GM12878 (cell line): ENCODE measurements at regions of chr2 and their contacts with region 1.

Region 1: GRCh38 chr2:150487537-150488429 is at the start of gene RND3:
- DNase-seq: no peak
- ATAC-seq: peak; percentile 60
- H3K4me3 ChIP-seq: no peak within 1 kb of the TSS
- H3K27ac ChIP-seq: no peak within 1 kb of the TSS
- H3K4me1 ChIP-seq: no peaks in the 10 kb centered on the region
- H3K27me3 ChIP-seq: peaks cover 0 to 12% of the 10 kb centered on the region in 2 experiments
- CTCF ChIP-seq: peak; percentile 66 to 76 (median 73)
- EP300 ChIP-seq: no peak
- POLR2A ChIP-seq: no peak
- RAD21 ChIP-seq: peak; percentile 75
- polyA plus RNA-seq, gene RND3: 1.0 to 1.3 TPM

Region 2: DNA sequence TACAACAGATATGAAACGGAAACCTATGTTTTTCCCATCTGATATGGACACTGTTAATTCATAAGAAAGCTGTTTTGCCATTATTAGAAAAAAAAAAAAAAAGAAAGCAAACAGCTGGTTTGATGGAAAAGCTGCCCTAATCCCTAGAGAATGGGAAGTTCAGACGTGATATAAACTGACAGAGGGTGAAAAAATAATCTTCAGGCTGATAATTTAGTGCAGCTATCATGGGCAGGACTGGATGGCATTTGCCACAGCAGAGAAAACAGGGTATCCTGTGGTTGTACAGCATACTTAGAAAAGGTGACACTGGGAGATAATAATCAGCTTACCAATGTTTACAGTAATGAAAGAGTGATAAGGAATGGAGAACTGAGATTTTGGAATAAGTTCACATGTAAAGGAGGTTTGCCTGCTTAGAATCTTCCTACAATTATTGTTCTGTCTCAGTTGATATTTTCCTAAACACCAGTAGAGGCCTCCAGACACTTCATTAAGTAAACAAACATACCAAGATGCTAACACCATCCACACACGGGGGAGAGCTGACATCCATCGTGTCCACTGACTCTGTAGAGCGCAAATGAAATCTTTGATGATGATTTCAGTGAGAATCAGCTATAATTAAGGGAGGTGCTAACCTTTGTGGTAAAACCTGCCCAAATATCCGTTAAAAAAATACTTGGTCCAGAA is 688.6 kb before region 1 on chr2:
- CTCF ChIA-PET with region 1: no interaction called
- POLR2A ChIA-PET with region 1: no interaction called
- RAD21 ChIA-PET with region 1: no interaction called
- SMC1A ChIA-PET with region 1: no interaction called
- in situ Hi-C with region 1: no loop called
- intact Hi-C with region 1: loop called (anchors 5 kb)
- DNase-seq: no peak
- ATAC-seq: peak; percentile 60
- H3K4me3 ChIP-seq: no peak overlapping the region
- H3K27ac ChIP-seq: no peak overlapping the region
- H3K4me1 ChIP-seq: no peaks in the 10 kb centered on the region
- H3K27me3 ChIP-seq: no peaks in the 10 kb centered on the region
- CTCF ChIP-seq: peak in 2 of 3 experiments; percentile 19 to 51; a peak in 3 of 6 replicates
- EP300 ChIP-seq: no peak
- POLR2A ChIP-seq: no peak
- RAD21 ChIP-seq: peak; percentile 51

Region 3: DNA sequence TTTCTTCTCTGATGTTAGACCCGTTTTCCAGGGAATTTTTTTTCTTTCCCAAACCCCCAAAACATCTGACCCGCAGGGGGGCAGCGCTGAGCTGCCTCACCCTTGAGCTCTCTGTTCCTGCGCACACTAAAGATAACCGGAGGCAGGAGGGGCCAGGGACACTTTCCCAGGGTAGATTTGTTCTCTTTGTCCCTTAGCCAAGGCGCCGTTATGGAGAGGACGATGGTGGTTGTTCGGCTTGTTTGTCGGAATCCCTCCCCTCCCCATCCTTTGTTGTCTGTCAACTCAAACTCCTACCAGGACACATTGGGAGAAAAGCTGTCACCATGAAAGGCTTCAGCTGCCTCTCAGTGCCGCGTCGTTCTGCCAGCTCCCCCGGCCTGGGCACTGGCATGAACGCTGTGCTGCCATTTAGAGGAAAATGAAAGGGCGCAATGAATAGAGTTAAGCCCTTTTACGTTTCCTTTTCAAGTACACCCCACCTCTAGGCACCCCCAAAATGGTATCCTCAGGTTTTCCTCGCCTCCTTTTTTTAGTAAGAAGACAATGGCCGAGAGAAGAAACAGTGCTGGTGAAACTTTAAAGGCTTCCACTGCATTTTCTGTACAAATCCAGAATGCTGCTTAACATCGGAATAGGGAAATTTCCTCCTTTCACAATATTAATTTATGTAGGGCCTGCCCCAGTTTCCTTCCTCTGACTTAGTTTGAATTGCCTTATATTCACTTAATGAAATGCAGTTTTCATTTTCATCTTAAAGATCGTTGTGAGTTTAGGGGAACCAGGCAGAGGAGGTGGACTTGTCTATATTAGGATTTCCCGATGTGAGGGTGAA is 62.4 kb before region 1 on chr2:
- CTCF ChIA-PET with region 1: interaction called, 13 read pairs
- POLR2A ChIA-PET with region 1: no interaction called
- RAD21 ChIA-PET with region 1: interaction called, 11 read pairs
- SMC1A ChIA-PET with region 1: interaction called, 23 read pairs
- in situ Hi-C with region 1: no loop called
- intact Hi-C with region 1: no loop called
- DNase-seq: no peak
- ATAC-seq: peak; percentile 51
- H3K4me3 ChIP-seq: no peak overlapping the region
- H3K27ac ChIP-seq: no peak overlapping the region
- H3K4me1 ChIP-seq: no peaks in the 10 kb centered on the region
- H3K27me3 ChIP-seq: no peaks in the 10 kb centered on the region
- CTCF ChIP-seq: no peak
- EP300 ChIP-seq: no peak
- POLR2A ChIP-seq: no peak
- RAD21 ChIP-seq: no peak

Region 4: DNA sequence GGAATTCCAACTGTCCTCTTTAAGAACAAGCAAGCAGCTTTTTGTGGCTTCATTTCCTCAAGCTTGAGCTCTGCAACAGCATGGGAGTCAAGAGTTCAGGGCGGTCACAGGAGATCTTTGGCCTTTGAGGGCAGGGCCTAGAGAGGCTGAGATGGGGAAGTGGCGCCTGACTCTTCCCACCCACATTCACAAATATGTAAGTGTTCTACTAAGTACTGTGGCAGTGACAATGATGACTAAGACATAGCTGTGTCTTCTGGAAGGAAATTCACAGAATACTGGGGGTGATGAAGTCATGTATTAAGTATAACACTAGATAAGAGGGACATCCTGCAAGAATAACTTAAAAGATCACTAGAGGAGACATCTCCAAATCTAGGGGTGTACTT is 15.3 kb before region 1 on chr2:
- CTCF ChIA-PET with region 1: interaction called, 14 read pairs
- POLR2A ChIA-PET with region 1: interaction called, 45 read pairs
- RAD21 ChIA-PET with region 1: interaction called, 143 read pairs
- SMC1A ChIA-PET with region 1: interaction called, 66 read pairs
- in situ Hi-C with region 1: no loop called
- intact Hi-C with region 1: no loop called
- DNase-seq: no peak
- ATAC-seq: peak; percentile 85
- H3K4me3 ChIP-seq: no peak overlapping the region
- H3K27ac ChIP-seq: no peak overlapping the region
- H3K4me1 ChIP-seq: no peaks in the 10 kb centered on the region
- H3K27me3 ChIP-seq: no peaks in the 10 kb centered on the region; a peak in 1 of 4 replicates
- CTCF ChIP-seq: no peak
- EP300 ChIP-seq: peak in 1 of 2 experiments; percentile 26; a peak in 1 of 4 replicates
- POLR2A ChIP-seq: no peak
- RAD21 ChIP-seq: no peak

Region 5: GRCh38 chr2:150528861-150529801 is 41.3 kb after region 1 on chr2:
- CTCF ChIA-PET with region 1: interaction called, 8 read pairs
- POLR2A ChIA-PET with region 1: interaction called, 7 read pairs
- RAD21 ChIA-PET with region 1: interaction called, 25 read pairs
- SMC1A ChIA-PET with region 1: interaction called, 29 read pairs
- in situ Hi-C with region 1: no loop called
- intact Hi-C with region 1: no loop called
- DNase-seq: peak; percentile 45
- ATAC-seq: peak; percentile 96
- H3K4me3 ChIP-seq: no peak overlapping the region
- H3K27ac ChIP-seq: no peak overlapping the region
- H3K4me1 ChIP-seq: no peaks in the 10 kb centered on the region; the same call in 1 of the 2 replicates
- H3K27me3 ChIP-seq: no peaks in the 10 kb centered on the region
- CTCF ChIP-seq: no peak
- EP300 ChIP-seq: no peak; a peak in 1 of 4 replicates
- POLR2A ChIP-seq: no peak
- RAD21 ChIP-seq: no peak

Region 6: DNA sequence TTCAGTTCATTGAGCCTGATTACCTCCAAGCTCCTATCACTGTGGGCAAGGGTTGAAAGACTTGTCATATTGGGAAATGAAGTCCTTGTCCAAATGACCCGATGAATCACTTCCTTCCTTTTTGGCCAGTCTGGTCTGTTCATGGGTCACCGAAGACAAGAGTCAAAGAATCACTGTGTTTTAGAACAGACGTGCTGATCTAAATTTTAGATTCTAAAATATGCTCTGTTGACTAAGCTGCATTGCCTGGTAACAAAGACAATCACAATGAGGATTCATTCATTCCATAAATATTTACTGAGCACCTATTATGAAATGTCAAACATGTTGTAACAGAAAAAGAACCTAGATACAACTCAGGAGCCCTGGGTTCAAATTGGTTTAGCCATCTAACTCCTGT is 99.1 kb after region 1 on chr2:
- CTCF ChIA-PET with region 1: interaction called, 3 read pairs
- POLR2A ChIA-PET with region 1: interaction called, 8 read pairs
- RAD21 ChIA-PET with region 1: interaction called, 5 read pairs
- SMC1A ChIA-PET with region 1: interaction called, 10 read pairs
- in situ Hi-C with region 1: no loop called
- intact Hi-C with region 1: no loop called
- DNase-seq: no peak
- ATAC-seq: peak; percentile 51
- H3K4me3 ChIP-seq: no peak overlapping the region
- H3K27ac ChIP-seq: no peak overlapping the region
- H3K4me1 ChIP-seq: no peaks in the 10 kb centered on the region
- H3K27me3 ChIP-seq: no peaks in the 10 kb centered on the region
- CTCF ChIP-seq: no peak
- EP300 ChIP-seq: no peak
- POLR2A ChIP-seq: no peak
- RAD21 ChIP-seq: no peak

Region 7: DNA sequence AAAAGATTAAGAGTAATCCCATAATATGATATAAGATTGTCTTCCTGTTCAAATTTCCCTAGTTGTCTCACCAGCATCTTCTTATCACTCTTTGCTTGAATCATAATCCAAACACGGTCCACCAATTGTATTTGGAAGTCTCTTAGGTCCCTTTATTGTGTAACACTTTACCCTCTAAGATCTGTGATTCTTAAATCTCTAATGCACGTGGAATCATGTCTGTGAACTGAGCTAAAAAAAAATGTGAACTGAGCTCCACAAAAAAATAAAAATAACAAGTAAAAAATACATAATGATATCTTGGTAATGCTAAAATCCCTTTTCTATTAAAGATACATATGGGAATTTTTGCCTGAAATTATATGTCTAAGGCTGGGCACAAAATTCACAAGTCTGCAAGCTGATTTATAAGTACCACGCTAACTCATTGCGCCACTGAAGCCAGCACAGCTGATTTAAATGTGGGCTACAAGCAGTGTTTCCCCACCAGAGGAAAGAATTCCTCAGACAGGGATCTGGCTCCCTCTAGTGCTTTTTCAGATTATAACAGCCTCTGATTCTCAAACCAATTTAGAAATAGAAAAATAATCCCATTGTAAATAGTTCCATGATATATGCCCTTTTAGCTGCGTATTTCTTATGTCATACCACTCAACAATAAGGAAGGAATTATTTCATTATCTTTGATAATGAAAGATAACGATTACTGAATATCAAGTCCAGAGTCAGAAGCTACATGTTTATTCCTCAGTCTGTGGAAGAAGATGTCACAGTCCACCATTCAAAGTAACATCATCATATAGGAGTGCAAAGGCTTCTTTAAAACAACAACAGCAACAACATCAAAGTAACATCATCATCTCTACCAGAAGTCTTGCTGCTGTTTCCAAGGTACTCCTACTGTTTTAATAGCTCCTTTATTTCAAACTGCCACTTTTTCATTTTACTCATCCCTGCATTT is 751.0 kb after region 1 on chr2:
- CTCF ChIA-PET with region 1: interaction called, 3 read pairs
- POLR2A ChIA-PET with region 1: no interaction called
- RAD21 ChIA-PET with region 1: no interaction called
- SMC1A ChIA-PET with region 1: no interaction called
- in situ Hi-C with region 1: no loop called
- intact Hi-C with region 1: loop called (anchors 10 kb)
- DNase-seq: peak; percentile 8
- ATAC-seq: peak; percentile 86
- H3K4me3 ChIP-seq: no peak overlapping the region
- H3K27ac ChIP-seq: no peak overlapping the region
- H3K4me1 ChIP-seq: no peaks in the 10 kb centered on the region
- H3K27me3 ChIP-seq: no peaks in the 10 kb centered on the region; a peak in 1 of 4 replicates
- CTCF ChIP-seq: peak; percentile 60 to 84 (median 75); a peak in 5 of 6 replicates
- EP300 ChIP-seq: no peak
- POLR2A ChIP-seq: no peak
- RAD21 ChIP-seq: peak; percentile 86